GM12878 (cell line): ENCODE measurements at regions of chrX and their contacts with region 1.

Region 1: DNA sequence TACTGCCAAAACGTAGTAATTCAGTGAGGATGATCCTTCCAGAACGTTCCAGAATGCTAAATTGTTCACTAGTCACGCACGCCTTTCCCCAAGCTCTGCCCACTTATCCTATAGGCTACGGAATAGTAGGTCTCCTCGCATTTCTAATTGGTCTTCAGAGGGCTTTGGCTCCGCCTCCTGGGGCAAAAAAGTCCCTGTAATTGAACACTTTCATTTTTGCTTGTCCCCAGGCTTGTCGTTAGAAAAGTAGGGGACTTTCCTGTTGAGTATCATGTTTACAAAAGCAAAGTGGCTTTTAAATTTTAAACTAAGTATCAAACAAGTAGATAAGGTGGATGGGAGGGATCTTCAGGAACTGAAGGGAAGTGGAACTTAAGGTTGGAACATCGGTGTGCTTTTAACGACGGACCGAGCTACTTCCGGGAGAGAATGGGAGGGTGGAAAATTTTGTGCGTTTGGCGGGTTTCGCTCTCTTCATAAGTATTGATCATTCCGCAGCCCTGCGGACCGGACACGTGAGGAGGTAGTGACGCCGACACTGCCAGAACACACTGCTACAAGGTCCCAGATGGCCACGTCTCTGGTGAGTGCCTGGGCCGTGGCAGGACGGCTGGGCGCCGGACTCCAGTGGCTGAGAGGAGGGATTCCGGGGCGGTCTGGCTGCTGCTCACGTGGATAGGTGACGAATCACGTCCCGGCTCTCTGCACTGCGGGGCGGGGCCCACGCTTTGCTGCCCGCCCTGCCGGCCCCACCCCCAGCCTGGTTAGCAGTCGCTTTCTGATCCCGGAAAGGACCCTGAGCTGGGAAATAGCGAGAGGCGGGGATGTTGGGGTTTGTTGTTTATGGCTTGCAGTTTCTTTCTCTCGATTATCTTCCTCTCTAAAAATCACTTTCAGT is at the start of gene NXT2:
- DNase-seq: peak; percentile 73
- ATAC-seq: peak; percentile 99
- H3K4me3 ChIP-seq: peak within 1 kb of the TSS; percentile 64
- H3K27ac ChIP-seq: peak within 1 kb of the TSS; percentile 89
- H3K4me1 ChIP-seq: no peaks in the 10 kb centered on the region
- H3K27me3 ChIP-seq: no peaks in the 10 kb centered on the region
- CTCF ChIP-seq: no peak
- EP300 ChIP-seq: no peak; a peak in 1 of 4 replicates
- POLR2A ChIP-seq: peak; percentile 94
- RAD21 ChIP-seq: no peak
- polyA plus RNA-seq, gene NXT2: 17.4 to 30.0 TPM

Region 2: DNA sequence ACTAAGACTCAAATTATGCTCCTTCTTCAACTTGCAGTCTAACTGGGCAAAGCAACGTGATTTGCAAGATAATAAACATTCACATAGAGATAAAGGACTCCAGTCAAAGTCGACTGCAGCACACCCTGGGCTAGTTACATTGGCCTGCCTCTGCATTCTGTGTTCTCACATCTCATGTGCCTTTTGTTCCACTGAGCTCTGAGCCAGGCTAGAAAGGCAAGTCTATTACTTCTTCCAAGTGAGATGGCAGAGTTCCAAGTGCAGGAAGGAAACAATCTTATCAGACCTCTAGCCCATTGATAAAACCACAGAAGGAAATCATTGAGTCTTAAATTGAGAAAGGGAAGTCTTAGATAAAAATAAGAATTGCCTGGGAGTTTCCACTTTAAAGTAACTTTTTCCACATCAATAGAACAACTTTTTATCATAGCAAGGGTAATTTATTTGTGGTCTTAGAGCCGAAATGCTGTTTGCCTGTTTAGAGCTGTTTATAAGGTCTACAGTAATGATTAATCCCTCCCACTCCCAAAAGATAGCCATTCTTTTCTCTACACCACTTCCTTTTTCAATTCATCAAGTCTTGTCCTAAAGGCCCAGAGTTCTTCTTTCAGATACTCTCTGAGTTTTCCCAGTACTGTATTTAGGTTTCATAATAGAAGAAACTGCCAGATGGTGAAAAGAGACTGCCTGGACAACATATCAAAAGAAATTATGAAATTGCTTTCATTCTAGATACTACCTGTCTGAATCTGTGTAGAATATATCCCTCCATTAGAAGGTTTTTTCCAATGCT is 255.0 kb before region 1 on chrX:
- CTCF ChIA-PET with region 1: no interaction called
- POLR2A ChIA-PET with region 1: no interaction called
- RAD21 ChIA-PET with region 1: no interaction called
- SMC1A ChIA-PET with region 1: no interaction called
- in situ Hi-C with region 1: no loop called
- intact Hi-C with region 1: loop called (anchors 10 kb)
- DNase-seq: no peak
- ATAC-seq: peak; percentile 83
- H3K4me3 ChIP-seq: no peak overlapping the region
- H3K27ac ChIP-seq: no peak overlapping the region
- H3K4me1 ChIP-seq: no peaks in the 10 kb centered on the region
- H3K27me3 ChIP-seq: no peaks in the 10 kb centered on the region
- CTCF ChIP-seq: no peak
- EP300 ChIP-seq: no peak
- POLR2A ChIP-seq: no peak
- RAD21 ChIP-seq: no peak

Region 3: DNA sequence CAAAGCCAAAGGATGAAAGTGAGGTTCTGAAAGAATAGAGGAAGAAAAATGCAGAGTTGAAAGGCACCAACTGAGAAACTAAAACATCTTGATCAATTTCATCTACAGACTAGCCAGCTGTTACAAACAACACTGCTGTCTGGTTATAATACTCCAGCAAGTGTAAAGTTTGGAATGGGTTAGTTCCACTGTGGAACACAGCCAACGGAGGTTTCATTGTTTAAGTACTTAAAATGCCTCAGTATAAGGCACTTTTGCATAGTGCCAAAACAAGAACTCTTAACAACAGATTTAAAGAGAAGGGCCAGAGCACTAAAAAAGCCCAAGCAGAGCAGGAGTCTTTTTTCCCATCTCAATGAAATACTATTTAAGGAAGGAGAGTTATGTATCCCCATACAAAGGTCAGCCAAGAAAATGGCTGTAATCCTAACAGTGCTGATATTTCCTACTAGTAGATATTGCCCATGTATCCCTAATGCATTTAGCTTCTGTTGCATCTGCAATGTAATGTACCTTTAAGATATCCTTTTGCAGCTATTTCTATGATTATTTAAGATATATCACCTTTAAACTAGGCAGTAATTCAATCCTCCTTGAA is 179.8 kb after region 1 on chrX:
- CTCF ChIA-PET with region 1: no interaction called
- POLR2A ChIA-PET with region 1: no interaction called
- RAD21 ChIA-PET with region 1: no interaction called
- SMC1A ChIA-PET with region 1: no interaction called
- in situ Hi-C with region 1: no loop called
- intact Hi-C with region 1: no loop called
- DNase-seq: no peak
- ATAC-seq: no peak
- H3K4me3 ChIP-seq: no peak overlapping the region
- H3K27ac ChIP-seq: no peak overlapping the region
- H3K4me1 ChIP-seq: peaks cover 10% of the 10 kb centered on the region
- H3K27me3 ChIP-seq: no peaks in the 10 kb centered on the region
- CTCF ChIP-seq: no peak
- EP300 ChIP-seq: no peak
- POLR2A ChIP-seq: no peak
- RAD21 ChIP-seq: no peak

Region 4: GRCh38 chrX:110002300-110003166 is 465.8 kb after region 1 on chrX and contains the start of gene TMEM164:
- CTCF ChIA-PET with region 1: no interaction called
- POLR2A ChIA-PET with region 1: no interaction called
- RAD21 ChIA-PET with region 1: no interaction called
- SMC1A ChIA-PET with region 1: no interaction called
- in situ Hi-C with region 1: no loop called
- intact Hi-C with region 1: loop called (anchors 10 kb)
- DNase-seq: peak; percentile 52
- ATAC-seq: peak; percentile 89
- H3K4me3 ChIP-seq: peak within 1 kb of the TSS; percentile 68
- H3K27ac ChIP-seq: peak within 1 kb of the TSS; percentile 45
- H3K4me1 ChIP-seq: peaks cover 8% of the 10 kb centered on the region
- H3K27me3 ChIP-seq: no peaks in the 10 kb centered on the region
- CTCF ChIP-seq: no peak
- EP300 ChIP-seq: no peak
- POLR2A ChIP-seq: peak; percentile 71; the same call in 1 of the 2 replicates
- RAD21 ChIP-seq: no peak
- polyA plus RNA-seq, gene TMEM164: 0.61 to 1.2 TPM